Activated CD8-positive, alpha-beta T cell treated with anti-CD3 and anti-CD28 coated beads for 36 hours (primary cell): ENCODE measurements at regions of chr1 and their contacts with region 1.

Region 1: DNA sequence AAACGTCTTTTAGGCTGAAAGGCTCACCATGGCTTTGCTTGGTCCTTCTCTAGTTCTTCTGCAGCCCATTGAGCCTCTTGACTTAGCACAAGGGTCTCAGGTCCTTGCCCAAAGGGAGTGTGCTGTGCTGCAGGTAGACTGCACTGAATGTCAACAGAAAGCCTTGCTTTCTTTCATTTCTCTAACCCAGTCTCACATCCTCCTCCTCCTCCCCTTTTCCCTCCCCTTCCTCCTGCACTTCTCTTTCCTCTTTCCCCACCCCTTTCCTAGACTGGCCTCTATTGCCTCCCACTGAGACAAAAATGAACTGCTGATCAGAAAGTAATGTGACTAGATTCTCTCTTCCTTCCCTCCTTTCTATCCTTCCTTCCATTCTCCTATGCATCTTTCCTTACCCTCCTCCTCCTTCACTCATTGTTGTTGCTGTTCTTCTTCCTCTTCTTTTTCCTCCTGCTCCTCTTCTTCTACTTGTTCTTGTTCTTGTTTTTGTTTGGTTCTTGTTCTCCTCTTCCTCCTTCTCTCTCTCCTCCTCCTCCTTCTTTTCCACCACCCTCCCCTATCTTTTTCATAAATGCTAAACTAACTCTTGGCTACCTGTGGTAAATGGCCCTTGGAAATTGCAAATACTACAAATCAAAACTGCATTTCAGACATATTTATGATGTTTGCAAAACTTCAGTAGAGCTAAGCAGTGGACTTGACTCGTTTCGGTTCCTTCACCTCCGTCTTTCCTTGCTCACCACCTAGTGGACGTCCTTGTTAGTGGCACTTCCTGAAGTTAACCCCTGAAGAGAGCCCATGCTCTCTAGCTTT is at the start of gene SELL:
- DNase-seq: peak; percentile 88
- ATAC-seq: peak; percentile 80
- H3K4me3 Mint-ChIP-seq: peak within 1 kb of the TSS; percentile 79
- H3K27ac Mint-ChIP-seq: peak within 1 kb of the TSS; percentile 86
- H3K4me1 Mint-ChIP-seq: peaks cover 18% of the 10 kb centered on the region
- H3K27me3 Mint-ChIP-seq: no peaks in the 10 kb centered on the region
- CTCF ChIP-seq: peak; percentile 91
- total RNA-seq, gene SELL: 105 to 110 TPM

Region 2: GRCh38 chr1:169485544-169486278 is 226.0 kb before region 1 on chr1 and contains the start of gene SLC19A2:
- CTCF ChIA-PET with region 1: no interaction called
- POLR2A ChIA-PET with region 1: interaction called, 4 read pairs
- intact Hi-C with region 1: loop called (anchors 5 kb)
- DNase-seq: peak; percentile 96
- ATAC-seq: peak; percentile 99
- H3K4me3 Mint-ChIP-seq: peak within 1 kb of the TSS; percentile 87
- H3K27ac Mint-ChIP-seq: peak within 1 kb of the TSS; percentile 92
- H3K4me1 Mint-ChIP-seq: peaks cover 52% of the 10 kb centered on the region
- H3K27me3 Mint-ChIP-seq: no peaks in the 10 kb centered on the region
- CTCF ChIP-seq: peak; percentile 11
- total RNA-seq, gene SLC19A2: 5.7 to 6.4 TPM

Region 3: GRCh38 chr1:169586395-169587255 is 125.0 kb before region 1 on chr1 and contains the start of gene F5:
- CTCF ChIA-PET with region 1: interaction called, 45 read pairs
- POLR2A ChIA-PET with region 1: interaction called, 4 read pairs
- intact Hi-C with region 1: loop called (anchors 5 kb)
- DNase-seq: peak; percentile 90
- ATAC-seq: peak; percentile 90
- H3K4me3 Mint-ChIP-seq: peak within 1 kb of the TSS; percentile 91
- H3K27ac Mint-ChIP-seq: peak within 1 kb of the TSS; percentile 91
- H3K4me1 Mint-ChIP-seq: peaks cover 71% of the 10 kb centered on the region
- H3K27me3 Mint-ChIP-seq: no peaks in the 10 kb centered on the region
- CTCF ChIP-seq: peak; percentile 66
- total RNA-seq, gene F5: 20.7 to 23.3 TPM

Region 4: DNA sequence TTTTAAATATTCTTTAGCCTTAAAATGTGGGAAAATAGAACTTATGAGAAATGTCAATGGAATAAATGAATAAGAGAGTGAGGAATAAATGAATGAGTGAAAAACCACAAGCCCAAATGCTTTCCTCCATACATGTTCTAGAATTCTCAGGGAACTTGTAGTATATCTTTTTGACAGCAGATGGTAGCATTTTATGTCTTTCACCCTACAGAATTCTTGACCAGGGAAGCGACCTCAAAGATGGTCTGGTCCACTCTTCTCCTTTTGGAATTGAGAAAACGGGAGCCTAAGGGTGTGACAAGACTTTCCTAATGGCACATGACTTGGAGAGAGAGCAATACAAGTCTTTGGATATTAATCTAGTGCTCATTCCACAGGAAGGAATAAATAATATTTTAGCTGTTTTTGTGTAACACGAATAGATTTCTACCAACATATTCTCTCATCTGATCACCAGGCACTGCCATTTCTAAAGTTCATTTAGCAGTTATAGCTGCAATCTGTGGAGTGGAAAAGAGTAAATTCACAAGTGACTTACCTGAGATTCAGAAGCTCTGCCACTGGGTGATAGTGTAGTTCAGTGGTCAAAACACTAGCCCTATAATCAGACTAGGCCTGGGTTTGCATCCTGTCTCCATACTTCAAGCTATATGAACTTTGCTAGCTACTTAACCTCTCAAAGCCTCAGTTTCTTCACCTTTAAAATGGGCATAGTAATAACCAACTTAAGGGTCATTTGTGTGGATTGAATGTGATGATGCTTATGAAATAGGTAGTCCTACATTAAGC is 110.4 kb before region 1 on chr1:
- CTCF ChIA-PET with region 1: interaction called, 183 read pairs
- POLR2A ChIA-PET with region 1: interaction called, 4 read pairs
- intact Hi-C with region 1: loop called (anchors 1 kb)
- DNase-seq: no peak
- ATAC-seq: peak; percentile 38
- H3K4me3 Mint-ChIP-seq: no peak overlapping the region
- H3K27ac Mint-ChIP-seq: peak overlapping the region; percentile 69
- H3K4me1 Mint-ChIP-seq: peaks cover 47% of the 10 kb centered on the region
- H3K27me3 Mint-ChIP-seq: no peaks in the 10 kb centered on the region
- CTCF ChIP-seq: peak; percentile 77

Region 5: DNA sequence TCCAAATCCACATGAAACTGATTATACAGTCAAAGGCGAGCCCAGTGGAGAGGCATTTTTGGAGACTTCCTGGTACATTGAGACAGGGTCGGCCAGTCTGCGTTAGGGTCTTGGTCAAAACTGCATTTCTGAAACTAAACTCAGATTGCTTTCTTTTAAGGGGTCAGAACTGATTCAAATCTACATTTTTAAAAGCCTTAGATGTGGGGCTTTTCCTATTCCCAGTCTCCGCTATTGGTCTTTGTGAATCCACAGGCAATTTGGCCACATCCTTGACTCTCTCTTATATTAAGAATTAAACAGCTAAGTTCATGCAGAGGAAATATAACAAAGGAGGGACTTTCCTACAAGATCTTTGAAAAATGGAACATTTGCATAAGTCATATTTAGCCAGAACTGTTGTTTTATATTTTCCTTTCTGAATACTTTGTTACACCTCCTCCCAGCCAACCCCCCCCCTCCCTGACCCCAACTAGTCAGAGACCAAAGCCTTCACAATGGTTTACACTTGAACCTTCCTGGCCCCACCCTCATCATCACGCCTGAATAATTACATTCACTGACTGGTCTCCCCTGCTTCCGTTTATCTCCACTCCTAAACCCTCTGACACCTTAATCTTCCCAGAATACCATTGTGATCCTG is 31.2 kb before region 1 on chr1:
- CTCF ChIA-PET with region 1: interaction called, 24 read pairs
- POLR2A ChIA-PET with region 1: interaction called, 4 read pairs
- intact Hi-C with region 1: no loop called
- DNase-seq: peak; percentile 83
- ATAC-seq: peak; percentile 85
- H3K4me3 Mint-ChIP-seq: peak overlapping the region; percentile 48
- H3K27ac Mint-ChIP-seq: peak overlapping the region; percentile 92
- H3K4me1 Mint-ChIP-seq: peaks cover 59% of the 10 kb centered on the region
- H3K27me3 Mint-ChIP-seq: no peaks in the 10 kb centered on the region
- CTCF ChIP-seq: no peak

Region 6: GRCh38 chr1:169701261-169702005 is 10.2 kb before region 1 on chr1:
- CTCF ChIA-PET with region 1: interaction called, 16 read pairs
- POLR2A ChIA-PET with region 1: interaction called, 66 read pairs
- intact Hi-C with region 1: loop called (anchors 2 kb)
- DNase-seq: no peak
- ATAC-seq: peak; percentile 12
- H3K4me3 Mint-ChIP-seq: peak overlapping the region; percentile 3
- H3K27ac Mint-ChIP-seq: peak overlapping the region; percentile 82
- H3K4me1 Mint-ChIP-seq: peaks cover 93% of the 10 kb centered on the region
- H3K27me3 Mint-ChIP-seq: no peaks in the 10 kb centered on the region
- CTCF ChIP-seq: no peak

Region 7: GRCh38 chr1:169858467-169858866 is 146.8 kb after region 1 on chr1:
- CTCF ChIA-PET with region 1: no interaction called
- POLR2A ChIA-PET with region 1: no interaction called
- intact Hi-C with region 1: no loop called
- DNase-seq: no peak
- ATAC-seq: no peak
- H3K4me3 Mint-ChIP-seq: no peak overlapping the region
- H3K27ac Mint-ChIP-seq: no peak overlapping the region
- H3K4me1 Mint-ChIP-seq: no peaks in the 10 kb centered on the region
- H3K27me3 Mint-ChIP-seq: no peaks in the 10 kb centered on the region
- CTCF ChIP-seq: no peak